ENCODE measurements at regions of chr7 and their contacts with region 1.

Region 1: DNA sequence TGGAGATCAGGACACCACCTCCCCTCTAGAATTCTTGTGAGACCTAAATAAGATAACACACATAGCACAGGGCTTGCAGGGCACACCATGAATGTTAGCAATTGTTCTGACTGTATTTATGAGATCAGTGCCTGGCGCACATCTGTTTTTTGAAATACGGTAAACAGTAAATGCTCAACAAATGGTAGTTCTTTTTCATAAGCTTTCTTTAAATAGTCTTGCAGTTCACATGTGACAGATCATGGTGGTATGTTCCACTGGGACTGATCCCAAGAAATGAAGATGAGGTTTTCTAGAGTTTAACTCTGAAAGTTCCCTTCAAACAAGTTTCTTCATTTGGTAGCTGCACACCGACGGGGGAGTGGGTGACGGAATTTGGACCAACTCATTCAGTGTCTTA is 34.8 kb downstream of the CREB5 start:
- DNase-seq: no peak
- H3K4me3 ChIP-seq: no peak overlapping the region
- H3K27ac ChIP-seq: no peak overlapping the region
- H3K4me1 ChIP-seq: no peaks in the 10 kb centered on the region
- H3K27me3 ChIP-seq: no peaks in the 10 kb centered on the region
- CTCF ChIP-seq: no peak
- EP300 ChIP-seq: no peak
- RAD21 ChIP-seq: no peak

Region 2: GRCh38 chr7:28433699-28434219 is 13.3 kb before region 1 on chr7:
- CTCF ChIA-PET with region 1: interaction called, 21 read pairs
- POLR2A ChIA-PET with region 1: interaction called, 3 read pairs
- DNase-seq: peak; percentile 46
- H3K4me3 ChIP-seq: no peak overlapping the region
- H3K27ac ChIP-seq: no peak overlapping the region
- H3K4me1 ChIP-seq: peaks cover 0 to 10% of the 10 kb centered on the region in 2 experiments; a peak in 2 of 4 replicates
- H3K27me3 ChIP-seq: peaks cover 20% of the 10 kb centered on the region; the same call in 1 of the 2 replicates
- CTCF ChIP-seq: no peak
- EP300 ChIP-seq: no peak
- RAD21 ChIP-seq: no peak

Measured in SK-N-SH (cell line).